ENCODE measurements at regions of chr13 and their contacts with region 1.

Region 1: GRCh38 chr13:105410602-105411001 is 1124.9 kb downstream of the EFNB2 start:
- DNase-seq: peak; percentile 53
- H3K4me3 ChIP-seq: no peak overlapping the region
- H3K27ac ChIP-seq: no peak overlapping the region
- H3K4me1 ChIP-seq: no peaks in the 10 kb centered on the region
- H3K27me3 ChIP-seq: no peaks in the 10 kb centered on the region
- CTCF ChIP-seq: peak; percentile 91

Region 2: GRCh38 chr13:105127732-105128131 is 282.9 kb before region 1 on chr13:
- CTCF ChIA-PET with region 1: no interaction called
- dilution Hi-C with region 1: no loop called
- in situ Hi-C with region 1: no loop called
- intact Hi-C with region 1: no loop called
- DNase-seq: no peak
- H3K4me3 ChIP-seq: no peak overlapping the region
- H3K27ac ChIP-seq: no peak overlapping the region
- H3K4me1 ChIP-seq: no peaks in the 10 kb centered on the region
- H3K27me3 ChIP-seq: no peaks in the 10 kb centered on the region
- CTCF ChIP-seq: no peak

Region 3: GRCh38 chr13:105497597-105497996 is 87.0 kb after region 1 on chr13:
- CTCF ChIA-PET with region 1: no interaction called
- dilution Hi-C with region 1: no loop called
- in situ Hi-C with region 1: no loop called
- intact Hi-C with region 1: loop called (anchors 10 kb)
- DNase-seq: no peak
- H3K4me3 ChIP-seq: no peak overlapping the region
- H3K27ac ChIP-seq: no peak overlapping the region
- H3K4me1 ChIP-seq: no peaks in the 10 kb centered on the region
- H3K27me3 ChIP-seq: no peaks in the 10 kb centered on the region
- CTCF ChIP-seq: no peak